ENCODE measurements at regions of chr6 and their contacts with region 1.

Region 1: DNA sequence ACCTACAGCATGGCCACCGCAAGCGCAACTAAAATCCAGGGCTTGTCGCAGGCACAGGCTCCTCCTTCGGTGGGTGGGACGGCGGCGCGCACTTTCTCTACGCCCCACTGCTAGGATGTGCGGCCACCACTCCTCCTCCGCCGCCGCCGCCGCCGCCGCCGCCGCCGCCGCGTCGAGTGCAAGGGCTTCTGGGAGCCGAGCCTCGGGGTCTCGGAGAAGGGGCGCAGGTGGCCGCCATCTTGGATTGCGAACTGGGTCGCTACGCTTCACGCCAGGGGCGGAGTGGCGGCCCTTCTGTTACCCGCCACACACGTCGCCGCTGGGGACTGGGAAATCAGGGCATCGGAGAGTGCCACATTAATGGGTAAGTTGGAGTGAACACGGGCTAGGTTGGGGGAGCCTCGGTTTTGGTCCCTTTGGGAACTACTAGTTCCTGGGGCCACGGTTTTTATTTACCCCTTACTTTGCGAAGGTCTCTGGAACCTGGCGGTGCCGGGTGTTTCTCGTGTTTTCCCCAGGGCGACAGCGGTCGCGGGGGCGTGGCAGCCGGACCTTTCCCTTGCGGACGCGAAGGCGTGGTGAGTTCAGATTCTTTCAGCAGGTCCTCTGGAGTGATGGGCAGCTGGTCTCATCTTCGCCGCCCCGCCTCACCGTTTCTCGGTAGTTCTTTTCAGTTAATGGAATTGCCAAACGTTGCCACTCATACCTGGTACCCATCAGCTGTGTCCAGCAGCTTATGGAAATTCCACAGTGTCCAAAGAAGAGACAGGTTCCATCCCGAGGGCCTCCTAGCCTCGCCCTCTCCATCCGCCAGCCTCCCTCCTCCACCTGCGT is at the start of gene KPNA5:
- DNase-seq: peak; percentile 95
- H3K4me3 Mint-ChIP-seq: peak within 1 kb of the TSS; percentile 99
- H3K27ac Mint-ChIP-seq: peak within 1 kb of the TSS; percentile 96
- H3K4me1 Mint-ChIP-seq: peaks cover 41% of the 10 kb centered on the region
- H3K27me3 Mint-ChIP-seq: no peaks in the 10 kb centered on the region
- total RNA-seq, gene KPNA5: 10.0 to 10.2 TPM

Region 2: GRCh38 chr6:116695401-116695800 is 14.2 kb after region 1 on chr6:
- CTCF ChIA-PET with region 1: no interaction called
- POLR2A ChIA-PET with region 1: no interaction called
- intact Hi-C with region 1: loop called (anchors 1 kb)
- DNase-seq: no peak
- H3K4me3 Mint-ChIP-seq: no peak overlapping the region
- H3K27ac Mint-ChIP-seq: no peak overlapping the region
- H3K4me1 Mint-ChIP-seq: peaks cover 39% of the 10 kb centered on the region
- H3K27me3 Mint-ChIP-seq: no peaks in the 10 kb centered on the region

Region 3: GRCh38 chr6:116741571-116741970 is 60.4 kb after region 1 on chr6:
- CTCF ChIA-PET with region 1: no interaction called
- POLR2A ChIA-PET with region 1: no interaction called
- intact Hi-C with region 1: no loop called
- DNase-seq: no peak
- H3K4me3 Mint-ChIP-seq: no peak overlapping the region
- H3K27ac Mint-ChIP-seq: no peak overlapping the region
- H3K4me1 Mint-ChIP-seq: no peaks in the 10 kb centered on the region
- H3K27me3 Mint-ChIP-seq: no peaks in the 10 kb centered on the region